ENCODE measurements at regions of chr19 and their contacts with region 1.

Region 1: GRCh38 chr19:58154679-58155648 is 4.4 kb upstream of the ZNF329 start:
- DNase-seq: peak; percentile 98
- ATAC-seq: peak; percentile 80
- H3K4me3 Mint-ChIP-seq: peak overlapping the region; percentile 81
- H3K27ac Mint-ChIP-seq: no peak overlapping the region
- H3K4me1 Mint-ChIP-seq: peaks cover 9% of the 10 kb centered on the region
- H3K27me3 Mint-ChIP-seq: no peaks in the 10 kb centered on the region
- CTCF ChIP-seq: peak; percentile 92

Region 2: GRCh38 chr19:57746580-57747471 is 408.1 kb before region 1 on chr19 and contains the start of gene ZNF776:
- CTCF ChIA-PET with region 1: no interaction called
- POLR2A ChIA-PET with region 1: no interaction called
- intact Hi-C with region 1: loop called (anchors 10 kb)
- DNase-seq: peak; percentile 92
- ATAC-seq: peak; percentile 99
- H3K4me3 Mint-ChIP-seq: peak within 1 kb of the TSS; percentile 94
- H3K27ac Mint-ChIP-seq: peak within 1 kb of the TSS; percentile 95
- H3K4me1 Mint-ChIP-seq: peaks cover 23% of the 10 kb centered on the region
- H3K27me3 Mint-ChIP-seq: no peaks in the 10 kb centered on the region
- CTCF ChIP-seq: no peak
- total RNA-seq, gene ZNF776: 9.8 to 11.0 TPM

Region 3: DNA sequence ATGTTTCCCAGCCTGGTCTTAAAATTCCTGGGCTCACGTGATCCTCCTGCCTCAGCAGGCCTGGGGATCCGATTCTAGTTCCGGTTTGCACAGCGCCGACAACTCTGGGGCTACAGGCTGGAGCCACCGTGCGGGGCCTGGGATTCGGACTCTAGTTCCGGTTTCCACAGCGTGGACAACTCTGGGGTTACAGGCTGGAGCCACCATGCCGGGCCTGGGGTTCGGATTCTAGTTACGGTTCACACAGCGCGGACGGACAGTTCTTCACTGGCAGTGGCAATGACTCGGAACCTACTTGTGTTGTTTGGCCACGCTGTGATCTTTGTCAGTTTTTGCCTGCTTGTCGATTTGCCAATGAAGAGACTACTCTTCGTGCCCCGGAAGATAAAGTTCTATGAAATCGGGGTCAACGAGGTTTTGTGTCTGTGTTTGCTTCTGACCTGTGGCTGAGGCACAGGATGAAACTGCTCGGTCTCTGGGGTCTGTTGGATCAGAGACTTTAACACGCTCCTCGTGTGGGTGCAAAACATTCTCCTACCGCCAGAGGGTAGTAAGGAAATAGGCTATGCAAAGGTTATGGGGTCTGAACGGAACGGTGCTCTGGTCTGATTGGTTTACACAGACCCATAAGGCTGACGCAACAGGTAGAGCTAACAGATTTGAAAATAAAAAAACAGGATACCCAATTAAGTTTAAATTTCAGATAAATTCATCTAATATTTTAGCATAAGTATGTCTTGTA is 133.3 kb before region 1 on chr19:
- CTCF ChIA-PET with region 1: interaction called, 5 read pairs
- POLR2A ChIA-PET with region 1: no interaction called
- intact Hi-C with region 1: loop called (anchors 5 kb)
- DNase-seq: peak; percentile 81
- ATAC-seq: peak; percentile 100
- H3K4me3 Mint-ChIP-seq: no peak overlapping the region
- H3K27ac Mint-ChIP-seq: no peak overlapping the region
- H3K4me1 Mint-ChIP-seq: peaks cover 1% of the 10 kb centered on the region
- H3K27me3 Mint-ChIP-seq: peaks cover 4% of the 10 kb centered on the region
- CTCF ChIP-seq: peak; percentile 67

Region 4: DNA sequence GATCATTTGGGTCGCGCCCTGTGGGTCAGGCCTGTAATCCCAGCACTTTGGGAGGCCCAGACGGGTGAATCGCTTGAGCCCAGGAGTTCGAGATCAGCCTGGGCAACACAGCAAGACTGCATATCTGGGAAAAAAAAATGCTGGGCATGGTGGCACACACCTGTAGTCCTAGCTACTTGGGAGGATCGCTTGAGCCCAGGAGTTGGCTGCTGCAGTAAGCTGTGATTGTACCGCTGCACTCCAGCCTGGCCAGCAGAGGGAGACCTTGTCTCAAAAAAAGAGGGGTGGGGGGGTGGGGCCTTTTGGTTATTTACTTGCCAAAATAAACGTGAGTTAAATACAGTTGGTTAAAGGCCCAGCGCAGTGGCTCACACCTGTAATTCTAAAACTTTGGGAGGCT is 63.9 kb after region 1 on chr19:
- CTCF ChIA-PET with region 1: no interaction called
- POLR2A ChIA-PET with region 1: no interaction called
- intact Hi-C with region 1: no loop called
- DNase-seq: peak; percentile 56
- ATAC-seq: peak; percentile 74
- H3K4me3 Mint-ChIP-seq: no peak overlapping the region
- H3K27ac Mint-ChIP-seq: no peak overlapping the region
- H3K4me1 Mint-ChIP-seq: no peaks in the 10 kb centered on the region
- H3K27me3 Mint-ChIP-seq: no peaks in the 10 kb centered on the region
- CTCF ChIP-seq: peak; percentile 52